Gastrocnemius medialis (tissue), 4 donors: ENCODE measurements at regions of chr1 and their contacts with region 1.

Region 1: GRCh38 chr1:63960326-63960725 is 186.5 kb downstream of the ROR1 start:
- DNase-seq: peak; percentile 60 to 69
- ATAC-seq: peak; percentile 99
- H3K4me3 ChIP-seq: no peak overlapping the region
- H3K27ac ChIP-seq: peak overlapping the region; percentile 42 to 60 (median 54)
- H3K4me1 ChIP-seq: peaks cover 18 to 21% of the 10 kb centered on the region in 2 donors
- H3K27me3 ChIP-seq: no peaks in the 10 kb centered on the region
- CTCF ChIP-seq: no peak
- POLR2A ChIP-seq: no peak

Region 2: DNA sequence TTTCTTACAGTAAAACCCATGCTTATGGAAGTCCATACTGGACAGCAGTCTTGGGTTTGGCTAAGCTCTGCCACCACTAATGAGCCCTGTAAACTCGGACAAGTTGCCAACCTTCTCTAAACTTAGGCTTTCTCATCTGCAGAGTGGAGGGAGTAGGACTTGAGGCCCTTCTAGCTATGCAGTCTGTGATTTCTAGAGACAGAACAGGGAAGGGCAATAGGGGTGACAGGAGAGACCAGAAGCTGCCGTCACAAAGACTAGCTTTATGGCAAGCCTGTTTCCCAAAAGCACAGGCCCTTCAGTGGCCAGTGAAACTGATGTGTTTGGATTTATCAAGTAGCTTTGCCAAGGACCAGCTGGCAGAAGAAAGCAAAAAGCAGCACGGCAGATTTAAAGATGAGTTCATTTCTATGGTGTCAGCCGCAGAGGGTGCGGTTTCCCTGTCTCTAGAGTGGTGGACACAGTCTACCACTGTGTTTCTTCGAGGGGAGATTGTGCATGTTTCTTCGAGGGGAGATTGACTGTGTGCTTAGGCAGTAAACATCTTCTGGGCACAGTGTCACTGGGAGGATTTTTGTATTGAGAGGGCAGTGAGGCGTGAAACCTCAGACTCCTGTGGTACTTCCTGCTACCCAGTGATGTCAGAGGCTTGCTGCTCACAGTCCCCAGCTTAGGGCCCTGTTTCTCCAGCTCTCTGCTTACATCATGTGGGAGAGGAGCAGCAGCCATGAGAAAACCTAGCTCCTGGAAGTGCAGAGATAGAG is 67.5 kb before region 1 on chr1:
- in situ Hi-C with region 1: no loop called
- intact Hi-C with region 1: no loop called
- DNase-seq: no peak
- ATAC-seq: peak; percentile 21 to 33
- H3K4me3 ChIP-seq: no peak overlapping the region
- H3K27ac ChIP-seq: peak overlapping the region in 2 of 4 donors; percentile 7 to 43
- H3K4me1 ChIP-seq: peaks cover 0 to 10% of the 10 kb centered on the region in 2 donors
- H3K27me3 ChIP-seq: no peaks in the 10 kb centered on the region
- CTCF ChIP-seq: no peak
- POLR2A ChIP-seq: no peak

Region 3: GRCh38 chr1:63920154-63921117 is 39.9 kb before region 1 on chr1:
- in situ Hi-C with region 1: no loop called
- intact Hi-C with region 1: loop called (anchors 5 kb)
- DNase-seq: no peak
- ATAC-seq: no peak
- H3K4me3 ChIP-seq: no peak overlapping the region
- H3K27ac ChIP-seq: no peak overlapping the region
- H3K4me1 ChIP-seq: peaks cover 17% of the 10 kb centered on the region in 2 donors
- H3K27me3 ChIP-seq: no peaks in the 10 kb centered on the region
- CTCF ChIP-seq: peak in 1 of 5 experiments; percentile 6
- POLR2A ChIP-seq: no peak

Region 4: GRCh38 chr1:63935143-63935542 is 25.2 kb before region 1 on chr1:
- in situ Hi-C with region 1: no loop called
- intact Hi-C with region 1: loop called (anchors 2 kb)
- DNase-seq: peak in 1 of 2 donors; percentile 46
- ATAC-seq: peak; percentile 80 to 89
- H3K4me3 ChIP-seq: no peak overlapping the region
- H3K27ac ChIP-seq: peak overlapping the region in 2 of 4 donors; percentile 39 to 44
- H3K4me1 ChIP-seq: peaks cover 10 to 20% of the 10 kb centered on the region in 2 donors
- H3K27me3 ChIP-seq: no peaks in the 10 kb centered on the region
- CTCF ChIP-seq: peak; percentile 2 to 47 (median 33)
- POLR2A ChIP-seq: no peak

Region 5: GRCh38 chr1:64038965-64039926 is 78.9 kb after region 1 on chr1:
- in situ Hi-C with region 1: no loop called
- intact Hi-C with region 1: loop called (anchors 2 kb)
- DNase-seq: peak; percentile 92 to 94
- ATAC-seq: peak; percentile 93 to 94
- H3K4me3 ChIP-seq: no peak overlapping the region
- H3K27ac ChIP-seq: peak overlapping the region; percentile 83 to 95 (median 84)
- H3K4me1 ChIP-seq: peaks cover 51 to 57% of the 10 kb centered on the region in 2 donors
- H3K27me3 ChIP-seq: no peaks in the 10 kb centered on the region
- CTCF ChIP-seq: no peak
- POLR2A ChIP-seq: peak in 1 of 2 donors; percentile 65